ENCODE measurements at regions of chrX and their contacts with region 1.

Region 1: DNA sequence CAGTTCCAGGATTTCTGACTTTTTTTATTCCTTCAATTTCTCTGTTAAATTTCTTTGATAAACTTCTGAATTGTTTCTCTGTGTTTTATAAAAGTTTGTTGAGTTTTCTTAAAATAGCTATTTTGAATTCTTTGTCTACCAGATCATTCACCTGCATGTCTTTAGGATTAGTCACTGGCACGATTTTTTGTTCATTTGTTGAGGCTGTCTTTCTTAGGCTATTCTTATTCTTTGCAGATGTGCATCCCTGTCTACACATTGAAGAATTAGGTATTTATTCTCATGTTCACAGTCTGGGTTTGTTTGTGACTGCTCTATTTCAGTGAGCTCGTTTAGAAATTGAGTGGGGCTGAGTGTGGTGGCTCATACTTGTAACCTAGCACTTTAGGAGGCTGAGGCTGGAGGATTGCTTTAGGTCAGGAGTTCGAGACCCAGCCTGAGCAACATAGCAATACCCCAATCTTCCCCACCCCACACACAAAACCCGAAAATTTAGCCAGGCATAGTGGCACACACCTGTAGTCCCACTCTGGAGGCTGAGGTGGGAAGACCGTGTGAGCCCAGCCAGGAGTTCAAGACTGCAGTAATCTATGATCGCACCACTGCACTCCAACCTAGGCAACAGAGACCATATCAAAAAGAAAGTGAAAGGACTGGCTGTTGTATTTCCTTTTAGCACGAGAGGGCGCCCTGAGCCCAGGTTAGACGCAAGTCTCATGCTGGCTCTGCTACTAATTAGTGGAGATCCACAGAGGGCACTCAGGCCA is 42.0 kb downstream of the F8 start:
- DNase-seq: peak; percentile 73 to 78 (median 77)
- H3K4me3 ChIP-seq: peak overlapping the region in 1 of 2 donors; percentile 23
- H3K4me3 Mint-ChIP-seq: peak overlapping the region; percentile 83 to 91 (median 88)
- H3K27ac ChIP-seq: peak overlapping the region; percentile 17
- H3K27ac Mint-ChIP-seq: peak overlapping the region; percentile 50 to 95 (median 88)
- H3K4me1 ChIP-seq: peaks cover 7% of the 10 kb centered on the region
- H3K4me1 Mint-ChIP-seq: peaks cover 0 to 9% (median 6%) of the 10 kb centered on the region in 4 donors
- H3K27me3 ChIP-seq: no peaks in the 10 kb centered on the region
- H3K27me3 Mint-ChIP-seq: no peaks in the 10 kb centered on the region

Region 2: DNA sequence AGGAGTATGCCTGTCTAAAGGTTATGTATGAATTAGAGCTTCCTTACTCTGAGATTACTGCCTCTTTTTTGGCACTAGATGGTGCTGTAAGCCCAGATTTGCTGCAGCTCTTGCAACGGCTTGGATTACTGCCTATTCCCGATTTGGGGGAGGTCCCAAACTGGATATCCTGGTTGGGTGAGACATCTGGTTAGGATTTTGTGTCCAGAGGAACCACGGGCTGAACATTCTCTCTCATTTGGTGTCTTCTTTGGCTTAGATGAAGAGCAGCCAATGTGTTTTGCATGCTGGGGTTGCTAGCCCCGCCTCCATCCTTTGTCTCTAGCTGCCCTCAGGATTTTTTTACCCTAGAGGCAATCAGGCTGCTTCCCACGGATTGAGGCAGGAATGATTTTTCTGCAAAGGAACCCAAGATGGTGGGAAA is 62.4 kb before region 1 on chrX:
- CTCF ChIA-PET with region 1: no interaction called
- POLR2A ChIA-PET with region 1: no interaction called
- intact Hi-C with region 1: loop called (anchors 1 kb)
- DNase-seq: peak in 4 of 5 donors; percentile 31 to 37 (median 34)
- H3K4me3 ChIP-seq: no peak overlapping the region
- H3K4me3 Mint-ChIP-seq: peak overlapping the region; percentile 36 to 76 (median 64)
- H3K27ac ChIP-seq: no peak overlapping the region
- H3K27ac Mint-ChIP-seq: no peak overlapping the region
- H3K4me1 ChIP-seq: peaks cover 4% of the 10 kb centered on the region
- H3K4me1 Mint-ChIP-seq: peaks cover 0 to 5% (median 0%) of the 10 kb centered on the region in 4 donors
- H3K27me3 ChIP-seq: no peaks in the 10 kb centered on the region
- H3K27me3 Mint-ChIP-seq: peaks cover 5 to 6% of the 10 kb centered on the region in 2 donors

Region 3: GRCh38 chrX:155056877-155057792 is 76.6 kb after region 1 on chrX:
- CTCF ChIA-PET with region 1: interaction called, 33 read pairs
- POLR2A ChIA-PET with region 1: no interaction called
- intact Hi-C with region 1: loop called (anchors 1 kb)
- DNase-seq: peak; percentile 44 to 52 (median 47)
- H3K4me3 ChIP-seq: peak overlapping the region in 1 of 2 donors; percentile 19
- H3K4me3 Mint-ChIP-seq: peak overlapping the region; percentile 71 to 85 (median 78)
- H3K27ac ChIP-seq: peak overlapping the region; percentile 2
- H3K27ac Mint-ChIP-seq: peak overlapping the region; percentile 65 to 86 (median 81)
- H3K4me1 ChIP-seq: peaks cover 13% of the 10 kb centered on the region
- H3K4me1 Mint-ChIP-seq: peaks cover 7 to 26% (median 15%) of the 10 kb centered on the region in 4 donors
- H3K27me3 ChIP-seq: no peaks in the 10 kb centered on the region
- H3K27me3 Mint-ChIP-seq: no peaks in the 10 kb centered on the region

Region 4: GRCh38 chrX:155086202-155086840 is 105.8 kb after region 1 on chrX:
- CTCF ChIA-PET with region 1: interaction called, 11 read pairs
- POLR2A ChIA-PET with region 1: no interaction called
- intact Hi-C with region 1: loop called (anchors 1 kb)
- DNase-seq: peak; percentile 15 to 34 (median 30)
- H3K4me3 ChIP-seq: no peak overlapping the region
- H3K4me3 Mint-ChIP-seq: no peak overlapping the region
- H3K27ac ChIP-seq: no peak overlapping the region
- H3K27ac Mint-ChIP-seq: peak overlapping the region in 2 of 7 donors; percentile 30 to 65
- H3K4me1 ChIP-seq: no peaks in the 10 kb centered on the region
- H3K4me1 Mint-ChIP-seq: peaks cover 0 to 6% (median 0%) of the 10 kb centered on the region in 4 donors
- H3K27me3 ChIP-seq: no peaks in the 10 kb centered on the region
- H3K27me3 Mint-ChIP-seq: no peaks in the 10 kb centered on the region

Region 5: DNA sequence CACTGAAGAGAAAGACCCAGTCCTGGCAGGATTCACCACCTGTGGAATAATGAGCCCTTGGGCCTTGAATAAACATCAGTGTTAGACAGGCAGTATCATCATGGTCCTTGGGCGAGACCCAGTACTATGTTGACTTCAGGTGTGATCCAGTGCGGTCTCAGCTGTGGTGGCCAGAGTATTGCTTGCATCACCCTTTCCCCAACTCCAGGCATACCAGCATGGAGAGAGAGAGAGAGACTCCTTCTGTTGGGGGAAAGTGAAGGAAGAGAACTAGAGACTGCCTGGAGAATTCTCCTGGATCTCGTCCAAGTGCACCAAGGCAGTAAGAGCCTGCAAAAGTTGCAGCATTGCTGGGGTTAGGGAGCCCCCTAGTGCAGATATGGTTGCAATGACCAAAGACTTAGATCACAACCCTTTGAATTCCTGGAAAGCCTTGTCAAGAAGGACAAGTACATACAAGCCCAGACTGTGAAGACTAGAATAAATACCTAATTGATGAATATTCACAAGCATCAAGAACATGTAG is 839.5 kb after region 1 on chrX:
- CTCF ChIA-PET with region 1: no interaction called
- POLR2A ChIA-PET with region 1: no interaction called
- intact Hi-C with region 1: loop called (anchors 1 kb)
- DNase-seq: peak; percentile 36 to 43 (median 39)
- H3K4me3 ChIP-seq: no peak overlapping the region
- H3K4me3 Mint-ChIP-seq: no peak overlapping the region
- H3K27ac ChIP-seq: no peak overlapping the region
- H3K27ac Mint-ChIP-seq: no peak overlapping the region
- H3K4me1 ChIP-seq: no peaks in the 10 kb centered on the region
- H3K4me1 Mint-ChIP-seq: no peaks in the 10 kb centered on the region
- H3K27me3 ChIP-seq: peaks cover 3% of the 10 kb centered on the region
- H3K27me3 Mint-ChIP-seq: peaks cover 4 to 15% of the 10 kb centered on the region in 2 donors

Measured in CD4-positive, alpha-beta memory T cell (primary cell).